K562 (cell line): ENCODE measurements at regions of chr5 and their contacts with region 1.

Region 1: DNA sequence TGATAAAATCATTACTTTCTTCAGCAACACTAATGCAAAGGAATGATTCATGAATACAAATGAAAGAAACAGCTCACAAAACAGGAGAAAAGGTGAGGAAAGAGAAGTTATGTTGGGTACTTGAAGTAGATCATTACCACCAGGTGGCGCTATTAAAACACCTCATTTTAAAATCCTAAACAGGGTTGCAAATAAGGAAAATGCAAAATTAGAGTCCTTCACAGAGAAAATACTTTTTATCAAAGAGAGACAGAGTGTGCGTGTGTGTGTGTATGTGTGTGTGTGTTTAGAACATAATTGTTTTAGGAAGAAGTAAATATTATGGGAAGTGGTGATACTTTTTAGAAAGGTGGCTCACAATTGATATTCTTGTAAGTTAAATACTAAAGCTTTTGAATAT is 49.5 kb upstream of the CD180 start:
- DNase-seq: peak; percentile 25 to 68 (median 28)
- ATAC-seq: peak; percentile 73
- H3K4me3 ChIP-seq: no peak overlapping the region
- H3K27ac ChIP-seq: no peak overlapping the region
- H3K4me1 ChIP-seq: no peaks in the 10 kb centered on the region
- H3K27me3 ChIP-seq: no peaks in the 10 kb centered on the region
- CTCF ChIP-seq: peak; percentile 24 to 71 (median 43); a peak in 5 of 6 replicates
- EP300 ChIP-seq: no peak
- POLR2A ChIP-seq: no peak
- RAD21 ChIP-seq: peak; percentile 77 to 85

Region 2: GRCh38 chr5:66518716-66519171 is 727.4 kb before region 1 on chr5:
- CTCF ChIA-PET with region 1: no interaction called
- POLR2A ChIA-PET with region 1: no interaction called
- in situ Hi-C with region 1: no loop called
- intact Hi-C with region 1: no loop called
- DNase-seq: no peak
- ATAC-seq: no peak
- H3K4me3 ChIP-seq: no peak overlapping the region
- H3K27ac ChIP-seq: no peak overlapping the region
- H3K4me1 ChIP-seq: no peaks in the 10 kb centered on the region
- H3K27me3 ChIP-seq: no peaks in the 10 kb centered on the region
- CTCF ChIP-seq: no peak
- EP300 ChIP-seq: no peak
- POLR2A ChIP-seq: no peak
- RAD21 ChIP-seq: no peak

Region 3: GRCh38 chr5:67123819-67124218 is 122.3 kb before region 1 on chr5:
- CTCF ChIA-PET with region 1: no interaction called
- POLR2A ChIA-PET with region 1: no interaction called
- in situ Hi-C with region 1: no loop called
- intact Hi-C with region 1: no loop called
- DNase-seq: no peak
- ATAC-seq: no peak
- H3K4me3 ChIP-seq: no peak overlapping the region
- H3K27ac ChIP-seq: no peak overlapping the region
- H3K4me1 ChIP-seq: peaks cover 0 to 6% of the 10 kb centered on the region in 2 experiments; a peak in 2 of 5 replicates
- H3K27me3 ChIP-seq: no peaks in the 10 kb centered on the region
- CTCF ChIP-seq: no peak
- EP300 ChIP-seq: no peak
- POLR2A ChIP-seq: no peak
- RAD21 ChIP-seq: no peak

Region 4: GRCh38 chr5:67156976-67157583 is 89.0 kb before region 1 on chr5:
- CTCF ChIA-PET with region 1: no interaction called
- POLR2A ChIA-PET with region 1: no interaction called
- in situ Hi-C with region 1: no loop called
- intact Hi-C with region 1: no loop called
- DNase-seq: peak; percentile 32 to 48 (median 46)
- ATAC-seq: peak; percentile 84
- H3K4me3 ChIP-seq: no peak overlapping the region
- H3K27ac ChIP-seq: no peak overlapping the region
- H3K4me1 ChIP-seq: no peaks in the 10 kb centered on the region
- H3K27me3 ChIP-seq: no peaks in the 10 kb centered on the region
- CTCF ChIP-seq: peak; percentile 38 to 69 (median 68)
- EP300 ChIP-seq: no peak
- POLR2A ChIP-seq: no peak
- RAD21 ChIP-seq: peak; percentile 52 to 69

Region 5: GRCh38 chr5:67425514-67425913 is 179.4 kb after region 1 on chr5:
- CTCF ChIA-PET with region 1: no interaction called
- POLR2A ChIA-PET with region 1: no interaction called
- in situ Hi-C with region 1: no loop called
- intact Hi-C with region 1: no loop called
- DNase-seq: no peak
- ATAC-seq: no peak
- H3K4me3 ChIP-seq: no peak overlapping the region
- H3K27ac ChIP-seq: no peak overlapping the region
- H3K4me1 ChIP-seq: no peaks in the 10 kb centered on the region
- H3K27me3 ChIP-seq: no peaks in the 10 kb centered on the region
- CTCF ChIP-seq: no peak
- EP300 ChIP-seq: no peak
- POLR2A ChIP-seq: no peak
- RAD21 ChIP-seq: no peak

Region 6: DNA sequence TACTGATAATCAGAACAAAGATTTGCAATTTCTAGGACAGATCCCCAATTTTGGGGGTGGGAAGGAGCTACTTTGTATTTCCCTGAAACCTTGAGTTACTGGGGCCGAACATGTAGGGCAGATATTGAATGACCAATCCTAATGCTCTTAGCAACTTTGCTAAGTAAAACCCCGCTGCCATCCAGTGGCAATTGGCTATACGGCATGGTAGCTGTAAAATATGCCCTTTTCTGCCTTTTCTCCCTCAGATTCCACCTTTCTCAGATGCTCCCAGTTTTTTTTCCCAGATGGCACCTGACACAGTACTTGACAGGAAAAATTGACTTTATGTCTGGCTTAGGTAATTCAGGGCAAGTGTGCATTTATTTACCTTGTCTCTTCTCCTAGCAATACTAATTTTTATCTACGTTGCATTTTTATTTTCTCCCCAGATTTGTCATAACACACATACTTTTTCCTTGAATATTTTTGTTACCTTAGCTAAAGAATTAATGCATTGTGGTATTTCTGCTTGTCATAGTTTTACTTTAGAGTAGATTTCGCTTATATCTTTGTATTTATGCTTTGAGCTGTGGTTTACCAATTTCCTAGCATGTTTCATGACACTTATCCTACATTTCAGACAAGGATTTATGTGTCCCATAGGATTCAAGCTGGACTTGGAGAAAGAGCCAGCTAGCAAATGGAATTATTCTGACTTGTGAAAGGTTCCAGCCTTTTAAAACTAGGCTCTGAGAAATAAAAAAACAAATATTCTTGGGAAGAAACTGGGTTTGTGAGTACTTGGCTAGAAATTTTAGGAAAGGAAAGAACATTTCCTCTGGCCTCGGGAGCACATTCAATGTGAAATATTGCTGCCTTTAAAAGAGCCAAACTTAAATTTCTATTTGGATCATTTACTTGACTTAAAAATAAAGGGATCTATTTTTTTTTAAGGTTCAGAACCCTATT is 1006.8 kb after region 1 on chr5:
- CTCF ChIA-PET with region 1: interaction called, 11 read pairs
- POLR2A ChIA-PET with region 1: no interaction called
- in situ Hi-C with region 1: loop called (anchors 10 kb)
- intact Hi-C with region 1: loop called (anchors 2 kb)
- DNase-seq: peak; percentile 10 to 62 (median 36)
- ATAC-seq: peak; percentile 89
- H3K4me3 ChIP-seq: no peak overlapping the region
- H3K27ac ChIP-seq: no peak overlapping the region
- H3K4me1 ChIP-seq: no peaks in the 10 kb centered on the region
- H3K27me3 ChIP-seq: no peaks in the 10 kb centered on the region
- CTCF ChIP-seq: peak; percentile 56 to 75 (median 64)
- EP300 ChIP-seq: no peak
- POLR2A ChIP-seq: no peak
- RAD21 ChIP-seq: peak; percentile 83 to 86

Region 7: DNA sequence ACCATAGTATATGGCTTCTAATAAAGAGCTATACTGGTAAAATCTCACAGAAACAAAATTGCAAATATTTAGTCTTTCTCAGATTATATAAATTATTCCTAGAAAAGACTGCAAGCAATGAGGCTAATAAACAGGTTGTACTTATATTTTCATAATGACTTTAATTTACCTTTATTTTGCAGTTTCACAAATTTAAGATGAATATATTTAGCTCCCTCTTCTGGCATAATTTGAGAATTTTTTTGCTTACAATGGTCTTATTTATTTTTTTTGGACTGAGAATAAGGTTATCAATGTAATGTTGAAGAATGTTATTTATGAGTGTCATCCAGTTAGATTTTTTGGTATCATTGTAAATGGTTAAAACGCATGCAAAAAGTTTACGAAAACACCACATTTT is 1026.2 kb after region 1 on chr5:
- CTCF ChIA-PET with region 1: interaction called, 4 read pairs
- POLR2A ChIA-PET with region 1: no interaction called
- in situ Hi-C with region 1: no loop called
- intact Hi-C with region 1: loop called (anchors 5 kb)
- DNase-seq: no peak
- ATAC-seq: no peak
- H3K4me3 ChIP-seq: no peak overlapping the region
- H3K27ac ChIP-seq: no peak overlapping the region
- H3K4me1 ChIP-seq: no peaks in the 10 kb centered on the region
- H3K27me3 ChIP-seq: no peaks in the 10 kb centered on the region; a peak in 1 of 5 replicates
- CTCF ChIP-seq: peak in 1 of 3 experiments; percentile 51; a peak in 2 of 6 replicates
- EP300 ChIP-seq: no peak
- POLR2A ChIP-seq: no peak
- RAD21 ChIP-seq: peak; percentile 53 to 58